ENCODE measurements at regions of chr1 and their contacts with region 1.

Region 1: DNA sequence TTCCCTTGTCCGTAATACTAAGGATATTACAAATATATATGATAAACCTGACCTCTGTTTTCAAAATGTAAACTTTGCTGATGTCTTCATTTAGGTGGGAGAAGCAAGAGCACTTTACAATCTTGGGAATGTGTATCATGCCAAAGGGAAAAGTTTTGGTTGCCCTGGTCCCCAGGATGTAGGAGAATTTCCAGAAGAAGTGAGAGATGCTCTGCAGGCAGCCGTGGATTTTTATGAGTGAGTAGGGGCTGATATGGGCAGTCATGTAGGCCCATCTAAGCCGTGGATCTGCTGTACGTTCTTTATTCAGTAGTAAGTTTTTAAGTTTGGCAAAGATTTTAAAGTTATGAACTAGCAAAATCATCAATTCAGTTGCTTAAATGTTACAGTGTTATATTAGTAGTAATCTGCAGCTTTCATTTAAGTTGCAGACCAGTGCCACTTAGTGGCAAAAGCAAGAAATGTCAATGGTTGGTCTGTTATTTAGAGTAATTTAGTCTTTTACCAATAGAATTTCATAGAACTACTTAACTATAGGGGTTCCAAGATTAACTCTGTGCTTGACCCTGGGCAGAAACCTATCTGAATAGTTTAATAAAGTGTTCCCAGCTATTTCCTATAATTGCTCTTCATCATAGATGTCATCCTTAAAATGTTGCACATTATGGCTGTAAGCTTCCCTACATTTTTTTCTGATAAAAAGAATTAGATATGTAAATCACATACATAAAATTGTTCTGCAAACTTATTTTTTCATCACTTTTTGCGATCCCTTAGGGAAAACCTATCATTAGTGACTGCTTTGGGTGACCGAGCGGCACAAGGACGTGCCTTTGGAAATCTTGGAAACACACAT is 21.3 kb downstream of the GPSM2 start:
- DNase-seq: peak in 1 of 2 donors; percentile 17
- H3K4me3 ChIP-seq: no peak overlapping the region
- H3K27ac ChIP-seq: no peak overlapping the region
- H3K4me1 ChIP-seq: no peaks in the 10 kb centered on the region
- H3K27me3 ChIP-seq: no peaks in the 10 kb centered on the region
- CTCF ChIP-seq: peak; percentile 33 to 77 (median 62)
- POLR2A ChIP-seq: no peak

Region 2: DNA sequence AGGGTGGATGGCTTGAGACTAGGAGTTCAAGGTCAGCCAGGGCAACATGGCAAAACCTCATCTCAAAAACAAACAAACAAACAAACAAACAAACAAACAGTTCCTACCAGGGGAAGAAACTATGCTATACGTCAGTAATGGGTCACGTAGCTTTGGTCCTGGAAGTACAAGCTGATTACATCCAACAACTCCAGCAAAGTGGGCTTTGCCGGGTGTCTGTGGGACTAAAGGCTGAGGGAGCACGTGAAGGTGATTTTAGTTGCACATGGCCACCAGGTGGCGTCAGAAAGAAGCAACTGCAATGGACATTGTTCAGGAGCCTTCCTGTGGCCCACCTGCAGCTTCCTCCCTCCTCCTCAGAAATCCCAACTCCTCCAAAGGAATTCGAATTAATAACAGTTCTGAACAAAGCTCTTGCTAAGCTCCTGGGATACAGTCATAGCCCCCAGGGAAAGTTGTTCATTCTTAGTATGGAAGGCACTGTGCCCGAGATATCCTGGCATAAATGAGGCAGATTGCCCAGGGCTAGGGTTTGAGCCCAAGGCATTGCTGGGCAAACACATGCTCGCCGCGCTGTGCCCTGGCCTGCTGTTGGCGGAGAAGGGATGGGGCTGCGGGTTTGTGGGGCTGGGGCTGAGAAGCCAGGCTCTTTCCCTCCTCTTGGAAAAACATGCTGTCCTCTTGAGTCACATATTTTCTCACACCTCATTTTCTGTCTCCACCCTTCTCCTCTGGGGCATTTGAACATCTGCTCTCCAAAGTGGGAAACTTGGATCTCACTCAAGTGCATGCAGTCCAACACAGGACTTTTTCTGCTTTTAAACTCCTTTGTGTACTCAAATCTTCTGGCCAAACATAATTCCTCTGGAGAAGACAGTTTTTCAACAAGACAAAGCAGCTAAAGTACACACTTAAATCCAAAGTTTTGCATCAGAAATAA is 69.8 kb before region 1 on chr1:
- intact Hi-C with region 1: loop called (anchors 5 kb)
- DNase-seq: peak; percentile 75 to 83
- H3K4me3 ChIP-seq: no peak overlapping the region
- H3K27ac ChIP-seq: peak overlapping the region in 2 of 3 donors; percentile 34 to 37
- H3K4me1 ChIP-seq: peaks cover 0 to 15% of the 10 kb centered on the region in 2 donors
- H3K27me3 ChIP-seq: no peaks in the 10 kb centered on the region
- CTCF ChIP-seq: peak; percentile 52 to 71 (median 66)
- POLR2A ChIP-seq: no peak

Region 3: DNA sequence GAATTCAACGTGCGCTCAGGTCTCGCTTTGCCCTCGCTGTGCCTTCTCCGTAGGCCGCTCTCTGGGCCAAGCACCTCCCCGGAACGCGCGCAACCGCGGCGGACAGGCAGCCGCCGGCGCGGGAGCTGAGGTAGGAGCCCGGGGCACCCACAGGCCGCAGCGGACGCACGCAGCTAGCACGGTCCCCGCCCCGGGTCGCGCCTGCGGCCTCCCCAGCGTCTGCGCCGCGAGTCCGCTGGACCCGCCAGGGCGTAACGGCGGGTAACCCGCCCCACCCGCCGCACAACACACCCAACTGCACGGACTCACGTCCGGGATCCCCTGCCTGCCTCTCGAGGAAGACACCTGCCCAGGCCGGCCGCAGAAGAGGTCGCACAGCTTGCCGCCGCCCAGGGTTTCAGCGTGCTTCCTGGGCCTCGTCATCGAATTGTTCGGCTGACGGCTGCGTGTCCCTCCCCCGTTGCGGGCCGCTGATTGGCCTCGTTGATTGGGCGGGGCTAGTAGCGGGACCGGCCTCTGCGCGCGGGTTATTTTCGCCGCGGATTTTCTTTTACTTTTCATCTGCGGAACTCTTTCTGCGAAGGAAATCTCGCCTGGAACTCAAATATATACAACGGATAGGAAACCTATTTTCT is 65.1 kb after region 1 on chr1 and contains the start of gene CLCC1:
- intact Hi-C with region 1: no loop called
- DNase-seq: peak; percentile 94 to 96
- H3K4me3 ChIP-seq: peak within 1 kb of the TSS; percentile 44 to 59 (median 58)
- H3K27ac ChIP-seq: peak within 1 kb of the TSS; percentile 86 to 92 (median 89)
- H3K4me1 ChIP-seq: peaks cover 17 to 21% of the 10 kb centered on the region in 2 donors
- H3K27me3 ChIP-seq: no peaks in the 10 kb centered on the region
- CTCF ChIP-seq: peak in 1 of 6 experiments; percentile 17
- POLR2A ChIP-seq: peak; percentile 37 to 93
- total RNA-seq, gene CLCC1: 29.3 to 35.6 (median 32.9) TPM